Dendritic cell treated with granulocyte-macrophage colony-stimulating factor and Interleukin-4, amounts not matched to agents 40 ng/mL and 50 ng/mL, for 4 days (primary cell): ENCODE measurements at regions of chr2 and their contacts with region 1.

Region 1: GRCh38 chr2:96265840-96266679 is at the starts of genes CIAO1 and TMEM127:
- H3K4me3 Mint-ChIP-seq: peak within 1 kb of the TSS; percentile 99
- H3K27ac Mint-ChIP-seq: peak within 1 kb of the TSS; percentile 99
- H3K4me1 Mint-ChIP-seq: peaks cover 52% of the 10 kb centered on the region
- H3K27me3 Mint-ChIP-seq: no peaks in the 10 kb centered on the region

Region 2: DNA sequence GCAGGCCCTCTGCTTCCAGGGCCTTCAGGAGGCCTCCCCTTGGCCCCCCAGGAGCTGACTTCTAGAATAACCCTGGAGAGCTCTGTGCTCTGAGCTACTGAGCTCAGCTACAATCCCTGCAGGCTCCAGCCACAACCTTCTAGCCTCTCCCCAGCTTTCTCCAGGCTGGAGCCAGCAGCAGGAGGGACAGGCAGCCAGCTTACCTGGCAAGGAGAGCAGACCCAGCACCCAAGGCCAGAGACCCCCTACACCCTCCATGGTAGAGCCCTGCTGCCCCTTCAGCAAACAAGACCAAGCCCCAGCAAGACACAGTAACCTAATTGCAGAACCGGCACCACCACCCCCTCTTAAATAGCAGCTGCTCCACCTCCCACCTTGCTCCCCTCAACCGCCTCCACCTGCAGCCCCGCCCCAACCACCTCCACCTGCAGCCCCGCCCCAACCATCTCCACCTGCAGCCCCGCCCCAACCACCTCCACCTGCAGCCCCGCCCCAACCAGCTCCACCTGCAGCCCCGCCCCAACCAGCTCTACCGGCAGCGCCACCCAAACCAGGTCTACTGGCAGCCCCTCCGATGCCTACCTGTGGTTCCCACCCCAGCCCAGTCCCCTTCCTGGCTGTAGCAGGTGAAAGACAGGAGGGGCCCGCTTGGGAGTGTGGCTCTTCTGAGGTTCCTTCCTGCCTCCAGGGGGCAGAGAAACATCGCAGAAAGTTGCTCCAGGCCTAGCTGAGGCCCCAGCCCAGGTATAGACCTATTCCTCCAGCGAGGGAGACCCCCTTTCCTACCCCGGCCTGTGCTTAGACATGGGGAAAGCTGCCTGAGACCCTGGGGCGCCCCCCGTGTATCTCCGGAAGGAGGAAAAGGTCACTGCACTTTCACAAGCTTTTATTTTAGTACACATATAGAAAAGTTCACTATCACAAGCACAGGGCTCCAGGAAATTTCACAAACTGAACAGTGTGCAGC is 127.6 kb before region 1 on chr2 and contains the start of gene ASTL:
- intact Hi-C with region 1: loop called (anchors 2 kb)
- H3K4me3 Mint-ChIP-seq: no peak within 1 kb of the TSS
- H3K27ac Mint-ChIP-seq: no peak within 1 kb of the TSS
- H3K4me1 Mint-ChIP-seq: peaks cover 24% of the 10 kb centered on the region
- H3K27me3 Mint-ChIP-seq: peaks cover 17% of the 10 kb centered on the region

Region 3: GRCh38 chr2:96208143-96209010 is 57.7 kb before region 1 on chr2 and contains the start of gene STARD7:
- intact Hi-C with region 1: loop called (anchors 2 kb)
- H3K4me3 Mint-ChIP-seq: peak within 1 kb of the TSS; percentile 86
- H3K27ac Mint-ChIP-seq: peak within 1 kb of the TSS; percentile 91
- H3K4me1 Mint-ChIP-seq: peaks cover 51% of the 10 kb centered on the region
- H3K27me3 Mint-ChIP-seq: no peaks in the 10 kb centered on the region

Region 4: GRCh38 chr2:96888072-96889011 is 622.3 kb after region 1 on chr2:
- intact Hi-C with region 1: no loop called
- H3K4me3 Mint-ChIP-seq: peak overlapping the region; percentile 13
- H3K27ac Mint-ChIP-seq: peak overlapping the region; percentile 35
- H3K4me1 Mint-ChIP-seq: peaks cover 45% of the 10 kb centered on the region
- H3K27me3 Mint-ChIP-seq: peaks cover 85% of the 10 kb centered on the region